ENCODE measurements at regions of chr13 and their contacts with region 1.

Region 1: DNA sequence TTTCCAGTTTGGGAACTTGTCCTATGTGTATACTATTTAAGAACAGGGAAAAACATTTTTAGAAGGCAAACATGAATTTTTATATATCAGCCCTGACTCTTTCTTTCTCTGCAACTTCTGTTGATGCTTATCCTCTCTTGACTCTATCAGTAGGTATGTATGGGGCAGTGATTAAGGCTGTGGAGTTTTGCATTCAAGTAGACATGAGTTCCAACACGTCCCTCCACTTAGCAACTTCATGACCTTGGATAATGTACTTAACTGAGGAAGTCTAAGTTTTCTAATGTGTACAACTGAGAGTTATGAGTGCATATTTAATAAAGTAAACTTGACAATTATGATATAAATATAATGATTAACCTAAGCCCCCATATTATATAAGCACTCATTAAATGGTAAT is 414.6 kb downstream of the TDRD3 start:
- DNase-seq: no peak
- H3K4me3 ChIP-seq: no peak overlapping the region
- H3K27ac ChIP-seq: no peak overlapping the region
- H3K4me1 ChIP-seq: no peaks in the 10 kb centered on the region
- H3K27me3 ChIP-seq: no peaks in the 10 kb centered on the region
- CTCF ChIP-seq: no peak
- EP300 ChIP-seq: no peak
- POLR2A ChIP-seq: no peak

Region 2: GRCh38 chr13:60838581-60838980 is 27.0 kb after region 1 on chr13:
- intact Hi-C with region 1: loop called in 1 of 4 experiments (anchors 2 kb)
- DNase-seq: no peak
- H3K4me3 ChIP-seq: no peak overlapping the region
- H3K27ac ChIP-seq: no peak overlapping the region
- H3K4me1 ChIP-seq: no peaks in the 10 kb centered on the region
- H3K27me3 ChIP-seq: no peaks in the 10 kb centered on the region
- CTCF ChIP-seq: no peak
- EP300 ChIP-seq: no peak
- POLR2A ChIP-seq: no peak

Region 3: GRCh38 chr13:61508936-61509335 is 697.4 kb after region 1 on chr13:
- intact Hi-C with region 1: no loop called
- DNase-seq: no peak
- H3K4me3 ChIP-seq: no peak overlapping the region
- H3K27ac ChIP-seq: no peak overlapping the region
- H3K4me1 ChIP-seq: no peaks in the 10 kb centered on the region
- H3K27me3 ChIP-seq: no peaks in the 10 kb centered on the region
- CTCF ChIP-seq: no peak
- EP300 ChIP-seq: no peak
- POLR2A ChIP-seq: no peak